ENCODE measurements at regions of chr7 and their contacts with region 1.

Region 1: DNA sequence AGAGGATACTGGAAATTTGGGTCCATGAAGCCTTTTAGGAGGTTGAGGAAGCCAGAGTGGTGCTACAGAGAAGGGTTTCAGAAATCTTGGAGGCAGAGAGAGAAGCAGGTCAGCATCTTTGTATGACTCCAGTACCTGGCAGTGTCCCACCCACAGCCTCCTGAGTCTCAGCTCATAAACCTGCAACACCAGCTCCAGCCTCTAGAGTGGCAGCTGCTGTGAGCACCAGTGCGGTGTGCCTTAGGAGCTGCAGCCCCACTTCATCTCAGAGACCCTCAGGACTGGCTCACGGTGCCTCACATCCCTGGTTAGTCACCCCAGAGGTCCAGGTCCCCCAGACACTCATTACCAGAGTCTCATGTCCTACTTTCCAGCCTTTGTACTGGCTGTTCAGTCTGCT is 84.8 kb upstream of the PRKAR2B start:
- DNase-seq: peak in 1 of 2 experiments; percentile 58
- H3K4me3 ChIP-seq: no peak overlapping the region
- H3K27ac ChIP-seq: no peak overlapping the region
- H3K4me1 ChIP-seq: no peaks in the 10 kb centered on the region
- H3K27me3 ChIP-seq: no peaks in the 10 kb centered on the region
- CTCF ChIP-seq: peak in 2 of 3 experiments; percentile 69 to 78; a peak in 3 of 4 replicates
- EP300 ChIP-seq: no peak
- POLR2A ChIP-seq: no peak
- RAD21 ChIP-seq: peak; percentile 33 to 58

Region 2: GRCh38 chr7:106870983-106871410 is 88.8 kb before region 1 on chr7:
- CTCF ChIA-PET with region 1: no interaction called
- POLR2A ChIA-PET with region 1: no interaction called
- DNase-seq: no peak
- H3K4me3 ChIP-seq: no peak overlapping the region
- H3K27ac ChIP-seq: no peak overlapping the region
- H3K4me1 ChIP-seq: no peaks in the 10 kb centered on the region
- H3K27me3 ChIP-seq: no peaks in the 10 kb centered on the region
- CTCF ChIP-seq: no peak
- EP300 ChIP-seq: no peak
- POLR2A ChIP-seq: no peak
- RAD21 ChIP-seq: no peak

Region 3: GRCh38 chr7:106947244-106947728 is 12.5 kb before region 1 on chr7:
- CTCF ChIA-PET with region 1: interaction called, 71 read pairs
- POLR2A ChIA-PET with region 1: no interaction called
- DNase-seq: peak in 1 of 2 experiments; percentile 83
- H3K4me3 ChIP-seq: no peak overlapping the region; a peak in 1 of 8 replicates
- H3K27ac ChIP-seq: no peak overlapping the region
- H3K4me1 ChIP-seq: peaks cover 0 to 14% (median 3%) of the 10 kb centered on the region in 4 experiments; a peak in 3 of 7 replicates
- H3K27me3 ChIP-seq: no peaks in the 10 kb centered on the region
- CTCF ChIP-seq: peak in 2 of 3 experiments; percentile 81 to 84; a peak in 3 of 4 replicates
- EP300 ChIP-seq: no peak
- POLR2A ChIP-seq: no peak
- RAD21 ChIP-seq: peak; percentile 90 to 96

Region 4: GRCh38 chr7:106978425-106979420 is 19.0 kb after region 1 on chr7:
- CTCF ChIA-PET with region 1: interaction called, 25 read pairs
- POLR2A ChIA-PET with region 1: no interaction called
- DNase-seq: no peak
- H3K4me3 ChIP-seq: no peak overlapping the region
- H3K27ac ChIP-seq: no peak overlapping the region
- H3K4me1 ChIP-seq: peaks cover 0 to 6% (median 0%) of the 10 kb centered on the region in 4 experiments; a peak in 1 of 7 replicates
- H3K27me3 ChIP-seq: no peaks in the 10 kb centered on the region
- CTCF ChIP-seq: no peak
- EP300 ChIP-seq: no peak
- POLR2A ChIP-seq: no peak
- RAD21 ChIP-seq: no peak

Region 5: GRCh38 chr7:107007007-107007891 is 47.5 kb after region 1 on chr7:
- CTCF ChIA-PET with region 1: interaction called, 10 read pairs
- POLR2A ChIA-PET with region 1: no interaction called
- DNase-seq: no peak
- H3K4me3 ChIP-seq: no peak overlapping the region
- H3K27ac ChIP-seq: no peak overlapping the region
- H3K4me1 ChIP-seq: no peaks in the 10 kb centered on the region
- H3K27me3 ChIP-seq: no peaks in the 10 kb centered on the region
- CTCF ChIP-seq: no peak
- EP300 ChIP-seq: no peak
- POLR2A ChIP-seq: no peak
- RAD21 ChIP-seq: no peak